Psoas muscle (tissue), 8 donors: ENCODE measurements at regions of chr2 and their contacts with region 1.

Region 1: GRCh38 chr2:2992622-2993021 is 385.0 kb downstream of the EIPR1 start:
- DNase-seq: no peak
- ATAC-seq: no peak
- H3K4me3 ChIP-seq: no peak overlapping the region
- H3K27ac ChIP-seq: no peak overlapping the region
- H3K4me1 ChIP-seq: no peaks in the 10 kb centered on the region
- H3K27me3 ChIP-seq: no peaks in the 10 kb centered on the region
- CTCF ChIP-seq: no peak

Region 2: GRCh38 chr2:2909086-2910035 is 83.3 kb before region 1 on chr2:
- intact Hi-C with region 1: no loop called
- DNase-seq: no peak
- ATAC-seq: no peak
- H3K4me3 ChIP-seq: no peak overlapping the region
- H3K27ac ChIP-seq: no peak overlapping the region
- H3K4me1 ChIP-seq: no peaks in the 10 kb centered on the region
- H3K27me3 ChIP-seq: peaks cover 0 to 2% (median 0%) of the 10 kb centered on the region in 3 donors
- CTCF ChIP-seq: no peak

Region 3: DNA sequence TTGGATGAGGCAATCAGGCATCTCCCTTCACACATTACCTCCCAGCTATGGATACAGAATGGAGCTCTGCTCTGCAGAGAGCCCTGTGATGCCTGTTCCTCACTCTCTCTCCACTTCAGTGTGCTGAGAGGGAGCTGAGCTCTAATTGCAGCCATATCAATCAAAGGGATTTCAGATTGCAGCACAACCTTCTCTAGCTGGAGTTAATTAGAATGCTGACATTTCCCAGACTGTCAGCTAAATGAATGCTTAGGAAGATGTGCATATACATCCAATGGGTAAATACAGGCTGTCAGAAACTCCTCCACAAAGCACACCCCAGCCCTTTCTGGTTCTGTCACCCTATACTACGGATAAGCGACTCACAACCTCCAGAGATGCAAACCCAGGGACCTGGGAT is 17.6 kb before region 1 on chr2:
- intact Hi-C with region 1: no loop called
- DNase-seq: no peak
- ATAC-seq: no peak
- H3K4me3 ChIP-seq: no peak overlapping the region
- H3K27ac ChIP-seq: no peak overlapping the region
- H3K4me1 ChIP-seq: no peaks in the 10 kb centered on the region
- H3K27me3 ChIP-seq: peaks cover 0 to 3% (median 0%) of the 10 kb centered on the region in 3 donors
- CTCF ChIP-seq: no peak

Region 4: DNA sequence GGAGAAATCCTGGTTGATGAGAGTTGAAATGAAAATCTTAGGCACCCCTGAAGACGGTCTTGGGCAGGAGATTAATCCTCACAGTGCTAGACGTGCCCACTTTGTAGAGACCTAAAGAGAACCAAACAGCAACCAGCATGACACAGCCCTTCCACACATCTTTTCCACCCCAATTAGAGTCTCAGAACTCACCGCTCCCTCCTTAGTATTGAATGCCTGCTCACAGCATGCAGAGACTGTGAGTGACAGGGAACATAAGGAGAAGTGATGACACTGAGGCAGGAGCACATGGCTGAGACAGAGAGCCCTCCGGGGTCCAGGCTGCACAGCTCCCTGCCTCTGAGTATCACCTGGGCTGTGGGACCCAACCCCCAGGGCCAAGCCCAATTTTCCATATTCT is 17.4 kb after region 1 on chr2:
- intact Hi-C with region 1: loop called in 1 of 2 experiments (anchors 2 kb)
- DNase-seq: no peak
- ATAC-seq: no peak
- H3K4me3 ChIP-seq: no peak overlapping the region
- H3K27ac ChIP-seq: no peak overlapping the region
- H3K4me1 ChIP-seq: no peaks in the 10 kb centered on the region
- H3K27me3 ChIP-seq: peaks cover 0 to 4% (median 0%) of the 10 kb centered on the region in 3 donors
- CTCF ChIP-seq: no peak